ENCODE measurements at regions of chr16 and their contacts with region 1.

Region 1: DNA sequence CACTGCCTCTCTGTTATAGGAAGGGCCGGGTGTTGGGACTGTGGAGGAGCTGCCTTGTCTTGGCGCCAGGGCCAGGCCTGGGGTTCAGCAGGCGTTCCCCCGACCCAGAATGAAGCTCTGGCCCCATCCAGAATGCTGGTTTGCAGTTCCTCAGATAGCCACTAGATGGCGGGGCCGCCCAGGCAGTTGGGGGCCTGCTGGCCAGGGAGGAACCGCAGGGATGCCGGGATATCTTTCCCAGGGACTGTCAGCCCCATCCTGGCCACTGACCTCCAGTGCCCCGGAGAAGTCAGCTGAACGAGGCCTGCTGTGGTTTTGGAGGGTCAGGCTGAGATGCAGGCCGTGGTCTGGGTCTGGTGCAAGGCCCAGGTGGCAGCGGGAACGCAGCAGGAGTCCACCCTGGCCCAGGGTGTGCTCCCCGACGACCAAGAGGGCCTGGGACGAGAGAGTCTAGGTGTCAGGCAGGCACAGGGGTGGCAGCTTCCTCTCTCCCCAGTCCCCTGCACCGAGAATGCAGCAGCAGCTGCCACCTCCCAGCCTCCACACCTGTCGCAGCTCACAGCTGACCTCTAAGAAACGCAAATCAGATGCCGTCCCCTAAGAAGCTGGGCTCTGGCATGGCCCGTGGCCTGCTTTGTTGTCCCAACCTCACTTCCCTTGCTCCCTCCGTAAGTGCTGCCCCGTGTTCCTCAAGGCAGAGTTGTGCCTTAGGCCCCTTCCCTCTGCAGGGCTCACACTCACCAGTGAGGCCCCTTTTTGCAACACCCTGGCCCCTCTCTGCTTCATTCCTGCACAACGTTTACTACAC is 51.2 kb downstream of the RMI2 start:
- DNase-seq: peak; percentile 69 to 76
- H3K4me3 ChIP-seq: no peak overlapping the region
- H3K27ac ChIP-seq: no peak overlapping the region
- H3K4me1 ChIP-seq: peaks cover 5 to 9% of the 10 kb centered on the region in 2 donors
- H3K27me3 ChIP-seq: no peaks in the 10 kb centered on the region
- CTCF ChIP-seq: peak; percentile 94 to 100 (median 97)
- POLR2A ChIP-seq: no peak

Region 2: GRCh38 chr16:10964039-10964890 is 432.2 kb before region 1 on chr16:
- intact Hi-C with region 1: loop called (anchors 5 kb)
- DNase-seq: peak; percentile 81 to 86
- H3K4me3 ChIP-seq: no peak overlapping the region
- H3K27ac ChIP-seq: peak overlapping the region in 1 of 3 donors; percentile 8
- H3K4me1 ChIP-seq: no peaks in the 10 kb centered on the region
- H3K27me3 ChIP-seq: no peaks in the 10 kb centered on the region
- CTCF ChIP-seq: peak; percentile 82 to 97 (median 90)
- POLR2A ChIP-seq: no peak

Region 3: GRCh38 chr16:11711662-11712061 is 315.2 kb after region 1 on chr16:
- intact Hi-C with region 1: loop called (anchors 5 kb)
- DNase-seq: no peak
- H3K4me3 ChIP-seq: no peak overlapping the region
- H3K27ac ChIP-seq: peak overlapping the region; percentile 50 to 87 (median 80)
- H3K4me1 ChIP-seq: peaks cover 40 to 55% of the 10 kb centered on the region in 2 donors
- H3K27me3 ChIP-seq: no peaks in the 10 kb centered on the region
- CTCF ChIP-seq: no peak
- POLR2A ChIP-seq: no peak

Region 4: GRCh38 chr16:11819798-11820197 is 423.4 kb after region 1 on chr16:
- intact Hi-C with region 1: loop called (anchors 10 kb)
- DNase-seq: no peak
- H3K4me3 ChIP-seq: no peak overlapping the region
- H3K27ac ChIP-seq: no peak overlapping the region
- H3K4me1 ChIP-seq: peaks cover 0 to 9% of the 10 kb centered on the region in 2 donors
- H3K27me3 ChIP-seq: no peaks in the 10 kb centered on the region
- CTCF ChIP-seq: no peak
- POLR2A ChIP-seq: no peak

Region 5: DNA sequence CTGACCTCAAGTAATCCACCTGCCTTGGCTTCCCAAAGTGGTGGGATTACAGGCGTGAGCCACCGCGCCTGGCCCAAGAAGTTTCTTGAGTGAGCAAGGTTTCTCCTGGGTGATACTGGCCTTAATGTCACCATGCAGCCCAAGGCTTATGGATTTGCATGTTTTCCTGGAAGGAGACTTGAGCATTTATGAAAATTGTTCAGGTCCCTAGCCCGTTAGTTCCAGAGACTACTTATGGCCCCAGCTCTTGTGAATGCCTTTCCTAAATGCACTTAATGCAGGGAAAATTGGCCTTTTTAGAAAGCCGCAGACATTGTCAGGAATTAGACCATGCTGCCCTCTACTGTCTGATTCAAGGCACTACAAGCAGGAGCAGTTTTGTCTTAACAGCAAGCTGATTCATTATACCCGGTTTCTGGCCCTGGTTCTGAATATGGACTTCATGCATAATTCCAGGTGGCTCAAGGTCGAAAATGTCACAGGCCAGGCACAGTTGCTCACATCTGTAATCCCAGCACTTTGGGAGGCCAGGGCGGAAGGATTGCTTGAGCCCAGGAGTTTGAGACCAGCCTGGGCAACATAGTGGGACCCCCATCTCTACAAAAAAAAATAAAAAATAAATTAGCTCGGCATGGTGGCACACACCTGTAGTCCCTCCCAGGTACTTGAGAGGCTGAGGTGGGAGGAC is 671.4 kb after region 1 on chr16:
- intact Hi-C with region 1: loop called (anchors 5 kb)
- DNase-seq: peak; percentile 52 to 68
- H3K4me3 ChIP-seq: no peak overlapping the region
- H3K27ac ChIP-seq: no peak overlapping the region
- H3K4me1 ChIP-seq: peaks cover 12 to 22% of the 10 kb centered on the region in 2 donors
- H3K27me3 ChIP-seq: no peaks in the 10 kb centered on the region
- CTCF ChIP-seq: peak; percentile 78 to 97 (median 95)
- POLR2A ChIP-seq: no peak